Right cardiac atrium (tissue), 5 donors: ENCODE measurements at regions of chr5 and their contacts with region 1.

Region 1: GRCh38 chr5:80255732-80256479 is at the start of gene SERINC5:
- DNase-seq: peak; percentile 90 to 95 (median 94)
- ATAC-seq: peak; percentile 96
- H3K4me3 ChIP-seq: peak within 1 kb of the TSS; percentile 62
- H3K27ac ChIP-seq: peak within 1 kb of the TSS; percentile 96
- H3K4me1 ChIP-seq: peaks cover 5% of the 10 kb centered on the region
- H3K27me3 ChIP-seq: no peaks in the 10 kb centered on the region
- total RNA-seq, gene SERINC5: 11.1 to 13.4 (median 12.4) TPM

Region 2: DNA sequence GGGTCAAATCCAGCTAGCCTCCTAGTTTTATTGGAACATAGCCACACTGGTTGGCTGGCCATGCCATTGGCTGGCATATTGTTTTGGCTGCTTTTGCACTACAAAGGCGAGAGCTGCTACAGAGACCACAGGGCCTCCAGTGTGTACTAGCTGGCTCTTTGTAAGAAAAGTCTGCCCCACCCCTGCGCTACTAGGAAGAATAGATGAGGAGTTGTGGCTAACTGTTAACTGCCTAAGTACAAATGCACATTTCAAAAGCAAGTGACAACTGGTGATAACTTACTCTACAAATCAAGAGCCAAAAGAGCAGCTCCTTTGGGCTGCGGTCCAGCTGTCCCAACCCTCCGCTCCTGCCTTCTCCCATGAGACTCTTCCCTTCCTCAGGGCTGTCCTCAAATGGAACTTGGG is 63.9 kb before region 1 on chr5:
- intact Hi-C with region 1: loop called (anchors 5 to 10 kb)
- DNase-seq: peak; percentile 44 to 76 (median 74)
- ATAC-seq: peak; percentile 70 to 78
- H3K4me3 ChIP-seq: no peak overlapping the region
- H3K27ac ChIP-seq: peak overlapping the region; percentile 76
- H3K4me1 ChIP-seq: peaks cover 19% of the 10 kb centered on the region
- H3K27me3 ChIP-seq: no peaks in the 10 kb centered on the region